ENCODE measurements at regions of chr19 and their contacts with region 1.

Region 1: GRCh38 chr19:28710278-28710677 is 502.7 kb downstream of the UQCRFS1 start:
- DNase-seq: peak in 6 of 9 donors; percentile 32 to 58 (median 42)
- ATAC-seq: no peak
- H3K4me3 ChIP-seq: no peak overlapping the region
- H3K4me3 Mint-ChIP-seq: no peak overlapping the region
- H3K27ac ChIP-seq: no peak overlapping the region
- H3K27ac Mint-ChIP-seq: no peak overlapping the region
- H3K4me1 ChIP-seq: no peaks in the 10 kb centered on the region
- H3K4me1 Mint-ChIP-seq: peaks cover 0 to 2% (median 0%) of the 10 kb centered on the region in 7 donors
- H3K27me3 ChIP-seq: no peaks in the 10 kb centered on the region
- H3K27me3 Mint-ChIP-seq: peaks cover 0 to 25% (median 5%) of the 10 kb centered on the region in 5 donors

Region 2: DNA sequence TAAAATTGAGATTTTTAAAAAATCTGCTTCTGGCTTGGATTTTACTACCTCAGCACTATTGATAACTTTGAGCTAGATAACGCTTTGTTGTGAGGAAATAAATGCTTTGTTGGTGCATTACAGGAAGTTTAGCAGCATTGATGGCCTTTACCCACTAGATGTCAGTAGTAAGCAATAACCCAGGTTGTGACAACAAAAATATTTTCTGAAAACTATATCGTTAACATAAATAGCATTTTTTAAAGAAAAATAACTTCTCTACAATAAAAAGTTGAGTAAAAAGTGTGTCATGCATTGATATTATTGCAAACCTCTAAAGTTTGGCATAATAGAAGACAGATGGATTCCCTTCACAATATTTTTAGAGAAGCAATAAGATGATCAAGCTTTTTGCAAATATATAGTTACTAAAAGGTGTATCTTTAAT is 743.9 kb before region 1 on chr19:
- CTCF ChIA-PET with region 1: no interaction called
- POLR2A ChIA-PET with region 1: no interaction called
- intact Hi-C with region 1: loop called in 1 of 2 experiments (anchors 2 kb)
- DNase-seq: peak in 1 of 9 donors; percentile 1
- ATAC-seq: no peak
- H3K4me3 ChIP-seq: no peak overlapping the region
- H3K4me3 Mint-ChIP-seq: no peak overlapping the region
- H3K27ac ChIP-seq: no peak overlapping the region
- H3K27ac Mint-ChIP-seq: no peak overlapping the region
- H3K4me1 ChIP-seq: no peaks in the 10 kb centered on the region
- H3K4me1 Mint-ChIP-seq: no peaks in the 10 kb centered on the region
- H3K27me3 ChIP-seq: no peaks in the 10 kb centered on the region
- H3K27me3 Mint-ChIP-seq: peaks cover 0 to 14% (median 2%) of the 10 kb centered on the region in 5 donors

Region 3: DNA sequence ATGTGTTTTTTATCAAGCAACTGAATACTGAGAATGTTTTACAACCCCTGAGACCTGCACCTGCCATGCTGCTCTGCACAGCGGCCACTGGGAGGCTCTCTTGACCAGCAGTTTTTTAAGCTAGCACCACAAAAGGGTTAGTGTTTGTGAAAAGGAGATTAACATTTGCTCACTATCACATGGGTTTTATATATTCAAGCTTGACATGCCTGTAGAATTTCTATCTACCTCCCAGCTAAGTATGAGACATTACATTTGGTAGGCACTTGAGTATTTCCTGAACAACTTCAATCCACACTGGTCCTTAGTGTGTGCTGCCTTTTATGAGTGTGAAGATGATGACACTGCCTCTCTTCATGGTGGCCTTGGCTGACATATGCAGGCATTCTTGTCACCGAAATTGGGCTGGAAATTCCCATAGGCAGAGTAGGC is 736.2 kb before region 1 on chr19:
- CTCF ChIA-PET with region 1: no interaction called
- POLR2A ChIA-PET with region 1: no interaction called
- intact Hi-C with region 1: loop called in 1 of 2 experiments (anchors 1 kb)
- DNase-seq: no peak
- ATAC-seq: no peak
- H3K4me3 ChIP-seq: no peak overlapping the region
- H3K4me3 Mint-ChIP-seq: no peak overlapping the region
- H3K27ac ChIP-seq: no peak overlapping the region
- H3K27ac Mint-ChIP-seq: no peak overlapping the region
- H3K4me1 ChIP-seq: no peaks in the 10 kb centered on the region
- H3K4me1 Mint-ChIP-seq: no peaks in the 10 kb centered on the region
- H3K27me3 ChIP-seq: no peaks in the 10 kb centered on the region
- H3K27me3 Mint-ChIP-seq: peaks cover 0 to 15% (median 0%) of the 10 kb centered on the region in 5 donors

Region 4: DNA sequence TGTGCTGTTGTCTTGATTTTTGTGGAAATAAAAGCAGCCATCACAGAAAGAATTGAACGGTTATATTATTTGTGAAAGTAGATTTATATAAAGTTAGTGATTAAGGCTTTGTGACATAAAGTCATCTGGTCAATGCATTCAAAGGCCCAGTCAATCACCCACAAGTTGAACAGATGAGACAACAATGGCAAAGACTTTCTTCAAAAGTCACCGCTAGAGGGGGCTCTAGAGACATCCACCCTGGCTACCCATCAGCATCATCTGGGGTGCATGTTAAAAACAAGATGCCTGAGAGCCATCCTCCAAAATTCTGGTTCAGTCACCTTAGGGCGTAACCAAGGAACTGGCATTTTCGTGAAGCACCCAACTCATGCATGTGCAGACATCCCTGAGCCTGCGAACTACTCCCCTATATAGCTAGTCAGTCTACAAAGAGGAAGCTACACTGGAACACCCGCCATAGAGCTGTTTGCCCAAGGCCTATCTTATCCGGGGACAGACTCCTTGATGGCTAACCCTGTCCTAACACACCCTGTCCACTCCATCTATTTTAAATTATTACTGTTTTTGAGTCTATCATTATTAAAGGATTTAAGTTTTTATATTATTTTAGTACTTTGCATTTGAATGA is 467.9 kb before region 1 on chr19:
- CTCF ChIA-PET with region 1: no interaction called
- POLR2A ChIA-PET with region 1: no interaction called
- intact Hi-C with region 1: loop called in 1 of 2 experiments (anchors 2 kb)
- DNase-seq: peak in 1 of 9 donors; percentile 27
- ATAC-seq: no peak
- H3K4me3 ChIP-seq: no peak overlapping the region
- H3K4me3 Mint-ChIP-seq: no peak overlapping the region
- H3K27ac ChIP-seq: no peak overlapping the region
- H3K27ac Mint-ChIP-seq: no peak overlapping the region
- H3K4me1 ChIP-seq: no peaks in the 10 kb centered on the region
- H3K4me1 Mint-ChIP-seq: peaks cover 0 to 2% (median 0%) of the 10 kb centered on the region in 7 donors
- H3K27me3 ChIP-seq: no peaks in the 10 kb centered on the region
- H3K27me3 Mint-ChIP-seq: no peaks in the 10 kb centered on the region

Region 5: GRCh38 chr19:28324275-28325060 is 385.8 kb before region 1 on chr19:
- CTCF ChIA-PET with region 1: no interaction called
- POLR2A ChIA-PET with region 1: no interaction called
- intact Hi-C with region 1: loop called in 1 of 2 experiments (anchors 10 kb)
- DNase-seq: no peak
- ATAC-seq: no peak
- H3K4me3 ChIP-seq: no peak overlapping the region
- H3K4me3 Mint-ChIP-seq: no peak overlapping the region
- H3K27ac ChIP-seq: no peak overlapping the region
- H3K27ac Mint-ChIP-seq: peak overlapping the region in 1 of 9 donors; percentile 67
- H3K4me1 ChIP-seq: no peaks in the 10 kb centered on the region
- H3K4me1 Mint-ChIP-seq: peaks cover 0 to 17% (median 0%) of the 10 kb centered on the region in 7 donors
- H3K27me3 ChIP-seq: no peaks in the 10 kb centered on the region
- H3K27me3 Mint-ChIP-seq: no peaks in the 10 kb centered on the region

Region 6: GRCh38 chr19:28466107-28467045 is 243.9 kb before region 1 on chr19:
- CTCF ChIA-PET with region 1: no interaction called
- POLR2A ChIA-PET with region 1: no interaction called
- intact Hi-C with region 1: loop called in 1 of 2 experiments (anchors 1 kb)
- DNase-seq: peak; percentile 22 to 68 (median 50)
- ATAC-seq: peak; percentile 61
- H3K4me3 ChIP-seq: no peak overlapping the region
- H3K4me3 Mint-ChIP-seq: peak overlapping the region in 1 of 10 donors; percentile 8
- H3K27ac ChIP-seq: no peak overlapping the region
- H3K27ac Mint-ChIP-seq: peak overlapping the region in 2 of 9 donors; percentile 62 to 83
- H3K4me1 ChIP-seq: peaks cover 11 to 15% of the 10 kb centered on the region in 2 donors
- H3K4me1 Mint-ChIP-seq: peaks cover 7 to 57% (median 25%) of the 10 kb centered on the region in 7 donors
- H3K27me3 ChIP-seq: no peaks in the 10 kb centered on the region
- H3K27me3 Mint-ChIP-seq: peaks cover 0 to 6% (median 0%) of the 10 kb centered on the region in 5 donors

Region 7: DNA sequence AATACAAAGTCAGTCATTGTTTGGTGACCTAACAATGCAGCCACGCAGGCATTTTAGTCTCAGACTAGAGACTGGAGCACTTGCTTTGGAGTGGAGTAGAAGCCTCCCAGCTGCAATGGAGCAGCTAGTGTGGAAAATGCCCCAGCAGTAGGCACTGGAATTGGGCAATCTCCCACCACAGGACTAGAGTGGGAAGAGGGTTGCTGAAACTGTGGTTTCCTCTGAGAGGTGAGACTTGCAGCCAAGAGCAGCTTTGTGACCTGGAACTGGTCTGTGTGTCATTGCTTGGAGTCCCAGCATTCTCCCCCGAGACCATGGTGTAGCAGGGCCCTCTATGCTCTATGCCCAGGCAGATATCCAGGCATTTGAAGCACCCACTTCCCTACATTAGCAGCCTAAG is 53.6 kb before region 1 on chr19:
- CTCF ChIA-PET with region 1: no interaction called
- POLR2A ChIA-PET with region 1: no interaction called
- intact Hi-C with region 1: no loop called
- DNase-seq: no peak
- ATAC-seq: no peak
- H3K4me3 ChIP-seq: no peak overlapping the region
- H3K4me3 Mint-ChIP-seq: no peak overlapping the region
- H3K27ac ChIP-seq: no peak overlapping the region
- H3K27ac Mint-ChIP-seq: no peak overlapping the region
- H3K4me1 ChIP-seq: no peaks in the 10 kb centered on the region
- H3K4me1 Mint-ChIP-seq: peaks cover 0 to 12% (median 2%) of the 10 kb centered on the region in 7 donors
- H3K27me3 ChIP-seq: no peaks in the 10 kb centered on the region
- H3K27me3 Mint-ChIP-seq: no peaks in the 10 kb centered on the region

Region 8: GRCh38 chr19:28785971-28786370 is 75.7 kb after region 1 on chr19:
- CTCF ChIA-PET with region 1: no interaction called
- POLR2A ChIA-PET with region 1: no interaction called
- intact Hi-C with region 1: no loop called
- DNase-seq: no peak
- ATAC-seq: no peak
- H3K4me3 ChIP-seq: no peak overlapping the region
- H3K4me3 Mint-ChIP-seq: no peak overlapping the region
- H3K27ac ChIP-seq: no peak overlapping the region
- H3K27ac Mint-ChIP-seq: no peak overlapping the region
- H3K4me1 ChIP-seq: no peaks in the 10 kb centered on the region
- H3K4me1 Mint-ChIP-seq: no peaks in the 10 kb centered on the region
- H3K27me3 ChIP-seq: no peaks in the 10 kb centered on the region
- H3K27me3 Mint-ChIP-seq: peaks cover 0 to 6% (median under 1%) of the 10 kb centered on the region in 5 donors